ENCODE measurements at regions of chr17 and their contacts with region 1.

Region 1: GRCh38 chr17:62093188-62094155 is 28.4 kb upstream of the MED13 start:
- DNase-seq: peak; percentile 56
- H3K4me3 Mint-ChIP-seq: no peak overlapping the region
- H3K27ac Mint-ChIP-seq: no peak overlapping the region
- H3K4me1 Mint-ChIP-seq: peaks cover 18% of the 10 kb centered on the region
- H3K27me3 Mint-ChIP-seq: no peaks in the 10 kb centered on the region

Region 2: GRCh38 chr17:62119373-62119772 is 25.9 kb after region 1 on chr17:
- CTCF ChIA-PET with region 1: no interaction called
- POLR2A ChIA-PET with region 1: no interaction called
- intact Hi-C with region 1: loop called (anchors 1 kb)
- DNase-seq: no peak
- H3K4me3 Mint-ChIP-seq: no peak overlapping the region
- H3K27ac Mint-ChIP-seq: no peak overlapping the region
- H3K4me1 Mint-ChIP-seq: peaks cover 23% of the 10 kb centered on the region
- H3K27me3 Mint-ChIP-seq: no peaks in the 10 kb centered on the region